Posterior vena cava (tissue), 2 donors: ENCODE measurements at regions of chr12 and their contacts with region 1.

Region 1: GRCh38 chr12:13864081-13864673 is 117.2 kb downstream of the GRIN2B start:
- DNase-seq: peak; percentile 91

Region 2: GRCh38 chr12:14167005-14167628 is 302.9 kb after region 1 on chr12:
- intact Hi-C with region 1: loop called in 1 of 2 experiments (anchors 5 kb)
- DNase-seq: no peak